ENCODE measurements at regions of chr10 and their contacts with region 1.

Region 1: GRCh38 chr10:122435212-122435827 is 19.1 kb upstream of the ARMS2 start:
- DNase-seq: no peak
- ATAC-seq: peak in 1 of 8 donors; percentile 43
- H3K4me3 ChIP-seq: no peak overlapping the region
- H3K27ac ChIP-seq: no peak overlapping the region
- H3K4me1 ChIP-seq: no peaks in the 10 kb centered on the region
- H3K27me3 ChIP-seq: no peaks in the 10 kb centered on the region
- CTCF ChIP-seq: peak; percentile 47 to 89 (median 70)

Region 2: GRCh38 chr10:120514035-120514620 is 1921.2 kb before region 1 on chr10:
- intact Hi-C with region 1: no loop called
- DNase-seq: peak in 1 of 2 donors; percentile 13
- ATAC-seq: no peak
- H3K4me3 ChIP-seq: no peak overlapping the region
- H3K27ac ChIP-seq: no peak overlapping the region
- H3K4me1 ChIP-seq: no peaks in the 10 kb centered on the region
- H3K27me3 ChIP-seq: peaks cover 0 to 11% (median 0%) of the 10 kb centered on the region in 7 donors
- CTCF ChIP-seq: no peak

Region 3: GRCh38 chr10:122213766-122214165 is 221.6 kb before region 1 on chr10:
- intact Hi-C with region 1: no loop called
- DNase-seq: no peak
- ATAC-seq: peak in 7 of 8 donors; percentile 30 to 67 (median 58)
- H3K4me3 ChIP-seq: no peak overlapping the region
- H3K27ac ChIP-seq: no peak overlapping the region
- H3K4me1 ChIP-seq: peaks cover 0 to 12% (median 0%) of the 10 kb centered on the region in 9 donors
- H3K27me3 ChIP-seq: no peaks in the 10 kb centered on the region
- CTCF ChIP-seq: peak in 3 of 9 donors; percentile 18 to 35 (median 31)

Region 4: DNA sequence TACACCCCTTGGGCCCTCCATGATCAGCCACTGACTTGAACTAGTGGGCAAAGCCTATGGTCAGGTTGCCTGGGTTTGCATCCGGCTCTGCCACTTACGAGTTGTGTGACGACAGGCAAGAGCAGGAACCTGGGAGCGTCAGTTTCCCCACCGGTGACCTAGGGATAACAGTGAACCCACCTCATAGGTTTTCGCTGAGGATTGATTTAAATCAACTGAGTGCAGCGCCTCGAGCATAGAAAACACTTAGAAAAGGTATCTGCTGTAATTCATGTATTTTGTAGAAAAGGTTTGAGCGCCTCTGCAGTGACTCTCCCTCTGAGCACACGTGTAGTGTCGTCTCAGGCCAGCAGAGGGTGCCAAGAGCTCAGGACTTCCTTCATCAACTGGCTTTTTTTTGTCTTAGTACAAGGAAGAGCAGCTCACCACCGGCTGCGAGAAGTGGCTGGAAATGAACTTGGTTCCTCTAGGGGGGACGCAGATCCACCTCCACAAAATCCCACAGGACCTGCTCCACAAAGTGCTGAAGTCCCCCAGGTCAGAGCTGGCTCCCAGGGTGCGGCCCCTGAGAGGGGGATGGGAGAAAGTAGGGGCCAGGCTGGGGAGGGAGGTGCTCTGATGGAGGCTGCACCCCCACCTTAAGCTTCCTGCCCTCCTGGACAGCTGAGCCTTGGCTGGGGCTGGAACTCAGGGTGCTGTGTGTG is 136.6 kb before region 1 on chr10:
- intact Hi-C with region 1: loop called (anchors 1 to 5 kb)
- DNase-seq: peak; percentile 70 to 72
- ATAC-seq: peak; percentile 77 to 92 (median 89)
- H3K4me3 ChIP-seq: peak overlapping the region in 4 of 10 donors; percentile 2 to 25 (median 14)
- H3K27ac ChIP-seq: no peak overlapping the region
- H3K4me1 ChIP-seq: peaks cover 0 to 14% (median 6%) of the 10 kb centered on the region in 9 donors
- H3K27me3 ChIP-seq: no peaks in the 10 kb centered on the region
- CTCF ChIP-seq: peak; percentile 84 to 96 (median 92)

Region 5: DNA sequence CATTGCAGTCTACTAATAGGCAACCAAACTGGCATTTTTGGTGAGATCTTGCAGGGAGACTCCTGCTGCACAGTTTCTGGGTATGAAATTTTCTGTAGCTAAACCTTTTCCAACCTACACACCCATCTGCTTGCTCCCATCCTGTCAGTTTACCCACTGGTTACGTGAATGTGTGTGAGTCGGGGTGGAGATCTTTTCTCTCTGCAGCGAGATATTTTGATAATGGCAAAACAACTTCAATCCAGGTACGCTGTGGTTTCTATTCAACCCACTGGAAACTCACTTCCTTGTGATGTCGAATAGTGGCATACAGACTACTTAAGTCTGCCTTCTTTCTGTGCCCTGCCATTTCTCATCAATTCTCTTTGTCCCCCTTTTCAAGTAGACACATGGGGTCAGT is 56.3 kb before region 1 on chr10:
- intact Hi-C with region 1: no loop called
- DNase-seq: no peak
- ATAC-seq: no peak
- H3K4me3 ChIP-seq: no peak overlapping the region
- H3K27ac ChIP-seq: peak overlapping the region in 3 of 10 donors; percentile 6 to 18 (median 17)
- H3K4me1 ChIP-seq: peaks cover 0 to 54% (median 35%) of the 10 kb centered on the region in 9 donors
- H3K27me3 ChIP-seq: no peaks in the 10 kb centered on the region
- CTCF ChIP-seq: no peak